MCF 10A (cell line): ENCODE measurements at regions of chr9 and their contacts with region 1.

Region 1: GRCh38 chr9:121322037-121322775 is 47.8 kb downstream of the STOM start:
- DNase-seq: peak; percentile 97
- H3K4me3 Mint-ChIP-seq: peak overlapping the region; percentile 7
- H3K27ac Mint-ChIP-seq: peak overlapping the region; percentile 100
- H3K4me1 Mint-ChIP-seq: peaks cover 43% of the 10 kb centered on the region
- H3K27me3 Mint-ChIP-seq: no peaks in the 10 kb centered on the region
- CTCF ChIP-seq: no peak

Region 2: GRCh38 chr9:121222524-121223171 is 99.6 kb before region 1 on chr9:
- CTCF ChIA-PET with region 1: interaction called, 10 read pairs
- POLR2A ChIA-PET with region 1: no interaction called
- intact Hi-C with region 1: no loop called
- DNase-seq: peak; percentile 65
- H3K4me3 Mint-ChIP-seq: no peak overlapping the region
- H3K27ac Mint-ChIP-seq: no peak overlapping the region
- H3K4me1 Mint-ChIP-seq: peaks cover 7% of the 10 kb centered on the region
- H3K27me3 Mint-ChIP-seq: no peaks in the 10 kb centered on the region
- CTCF ChIP-seq: peak; percentile 59

Region 3: GRCh38 chr9:121286973-121287741 is 35.0 kb before region 1 on chr9:
- CTCF ChIA-PET with region 1: interaction called, 53 read pairs
- POLR2A ChIA-PET with region 1: interaction called, 12 read pairs
- intact Hi-C with region 1: loop called (anchors 1 kb)
- DNase-seq: peak; percentile 99
- H3K4me3 Mint-ChIP-seq: peak overlapping the region; percentile 32
- H3K27ac Mint-ChIP-seq: peak overlapping the region; percentile 80
- H3K4me1 Mint-ChIP-seq: peaks cover 70% of the 10 kb centered on the region
- H3K27me3 Mint-ChIP-seq: no peaks in the 10 kb centered on the region
- CTCF ChIP-seq: peak; percentile 14

Region 4: DNA sequence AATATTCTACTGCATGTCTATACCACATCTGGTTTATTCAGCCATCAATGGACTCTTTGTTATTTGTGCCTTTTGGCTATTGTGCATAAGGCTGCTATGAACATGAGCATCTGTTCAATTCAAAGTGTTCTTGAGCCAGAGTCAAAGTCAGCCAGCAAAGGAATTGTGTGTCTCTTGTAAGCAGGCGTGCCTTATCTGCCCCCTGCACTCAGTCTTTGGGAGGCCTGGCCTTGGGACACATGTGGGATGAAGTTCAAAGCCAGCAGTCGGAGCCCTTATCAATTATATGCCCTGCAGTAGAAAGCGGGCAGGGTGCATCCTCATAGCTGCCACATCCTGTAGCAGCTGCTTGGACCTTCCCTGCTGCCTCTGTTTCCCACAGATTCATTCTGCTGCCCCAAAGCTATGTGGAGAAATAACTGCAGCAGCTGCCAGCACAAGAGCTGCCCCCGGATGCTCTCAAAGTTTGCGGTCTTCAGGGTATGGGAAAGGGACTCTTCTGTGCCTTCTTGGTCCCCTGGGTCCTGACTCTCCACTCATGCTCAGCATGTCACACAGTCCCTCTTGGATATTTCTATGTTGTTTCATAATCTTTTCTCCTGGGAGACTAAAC is 11.8 kb after region 1 on chr9:
- CTCF ChIA-PET with region 1: interaction called, 10 read pairs
- POLR2A ChIA-PET with region 1: interaction called, 9 read pairs
- intact Hi-C with region 1: no loop called
- DNase-seq: no peak
- H3K4me3 Mint-ChIP-seq: no peak overlapping the region
- H3K27ac Mint-ChIP-seq: peak overlapping the region; percentile 68
- H3K4me1 Mint-ChIP-seq: peaks cover 13% of the 10 kb centered on the region
- H3K27me3 Mint-ChIP-seq: no peaks in the 10 kb centered on the region
- CTCF ChIP-seq: no peak

Region 5: DNA sequence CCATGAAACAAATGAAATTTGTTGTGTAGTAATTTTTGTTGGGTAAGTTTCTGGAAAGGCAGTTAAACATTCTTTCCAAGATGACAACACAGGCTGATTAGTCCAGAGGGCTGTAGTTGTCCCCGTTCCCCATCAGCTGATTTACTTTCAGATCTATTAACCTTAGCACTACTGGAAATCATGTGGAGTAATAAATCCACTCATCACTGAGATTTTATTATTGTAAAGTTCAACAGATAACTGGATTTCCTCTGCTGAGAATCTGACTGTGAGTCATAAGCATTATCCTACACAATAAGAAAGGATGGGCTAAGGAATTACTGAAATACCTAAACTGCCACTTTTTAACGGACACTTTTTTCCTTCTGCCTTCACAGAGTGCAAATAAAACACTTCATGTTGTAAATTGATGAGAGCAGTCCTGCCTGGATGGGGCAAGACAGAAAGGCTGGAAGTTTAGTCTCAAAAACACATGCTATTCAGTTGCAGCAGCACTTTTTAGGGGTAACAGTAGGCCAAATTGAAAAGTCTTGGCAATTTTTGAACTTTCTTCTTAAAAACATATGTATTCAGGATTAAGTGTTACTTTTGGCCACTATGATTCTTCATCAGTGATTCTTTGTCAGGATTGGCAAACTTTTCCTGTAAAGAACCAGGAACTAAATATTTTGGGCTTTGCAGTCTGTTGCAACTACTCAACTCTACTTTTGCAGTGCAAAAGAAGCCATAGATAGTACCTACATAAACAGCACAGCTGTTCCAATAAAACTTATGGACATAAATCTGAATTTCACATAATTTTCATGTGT is 40.8 kb after region 1 on chr9:
- CTCF ChIA-PET with region 1: interaction called, 34 read pairs
- POLR2A ChIA-PET with region 1: interaction called, 12 read pairs
- intact Hi-C with region 1: no loop called
- DNase-seq: peak; percentile 47
- H3K4me3 Mint-ChIP-seq: peak overlapping the region; percentile 54
- H3K27ac Mint-ChIP-seq: peak overlapping the region; percentile 66
- H3K4me1 Mint-ChIP-seq: peaks cover 50% of the 10 kb centered on the region
- H3K27me3 Mint-ChIP-seq: no peaks in the 10 kb centered on the region
- CTCF ChIP-seq: no peak

Region 6: DNA sequence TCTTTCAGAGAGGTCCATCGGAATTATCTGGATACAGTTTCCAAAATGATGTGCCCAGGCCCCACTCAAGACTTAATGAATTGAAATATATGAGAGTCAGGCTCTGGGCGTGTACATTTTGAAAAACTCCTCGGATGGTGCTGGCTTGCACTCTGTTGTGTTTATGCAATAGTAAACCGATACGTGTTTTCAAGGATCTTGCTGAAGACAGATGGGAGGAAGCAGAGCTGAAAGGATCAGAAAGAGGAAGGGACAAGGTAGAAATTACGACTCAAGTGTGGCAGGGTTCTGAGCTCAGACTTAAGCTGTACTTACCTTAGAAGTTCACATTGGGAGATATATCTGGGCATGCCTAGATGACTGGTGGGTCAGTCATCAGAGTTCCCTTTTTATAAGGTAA is 61.5 kb after region 1 on chr9:
- CTCF ChIA-PET with region 1: interaction called, 133 read pairs
- POLR2A ChIA-PET with region 1: interaction called, 96 read pairs
- intact Hi-C with region 1: no loop called
- DNase-seq: no peak
- H3K4me3 Mint-ChIP-seq: no peak overlapping the region
- H3K27ac Mint-ChIP-seq: no peak overlapping the region
- H3K4me1 Mint-ChIP-seq: no peaks in the 10 kb centered on the region
- H3K27me3 Mint-ChIP-seq: no peaks in the 10 kb centered on the region
- CTCF ChIP-seq: no peak

Region 7: GRCh38 chr9:121439711-121440664 is 117.8 kb after region 1 on chr9:
- CTCF ChIA-PET with region 1: interaction called, 14 read pairs
- POLR2A ChIA-PET with region 1: no interaction called
- intact Hi-C with region 1: no loop called
- DNase-seq: peak; percentile 17
- H3K4me3 Mint-ChIP-seq: no peak overlapping the region
- H3K27ac Mint-ChIP-seq: no peak overlapping the region
- H3K4me1 Mint-ChIP-seq: no peaks in the 10 kb centered on the region
- H3K27me3 Mint-ChIP-seq: peaks cover 26% of the 10 kb centered on the region
- CTCF ChIP-seq: peak; percentile 15

Region 8: GRCh38 chr9:121557581-121558447 is 235.6 kb after region 1 on chr9:
- CTCF ChIA-PET with region 1: no interaction called
- POLR2A ChIA-PET with region 1: no interaction called
- intact Hi-C with region 1: no loop called
- DNase-seq: peak; percentile 86
- H3K4me3 Mint-ChIP-seq: no peak overlapping the region
- H3K27ac Mint-ChIP-seq: no peak overlapping the region
- H3K4me1 Mint-ChIP-seq: peaks cover 27% of the 10 kb centered on the region
- H3K27me3 Mint-ChIP-seq: no peaks in the 10 kb centered on the region
- CTCF ChIP-seq: no peak